CD8-positive, alpha-beta memory T cell (primary cell): ENCODE measurements at regions of chr10 and their contacts with region 1.

Region 1: GRCh38 chr10:3584941-3585340 is 200.1 kb downstream of the KLF6 start:
- DNase-seq: no peak
- H3K4me3 ChIP-seq: no peak overlapping the region
- H3K4me3 Mint-ChIP-seq: no peak overlapping the region
- H3K27ac ChIP-seq: no peak overlapping the region
- H3K27ac Mint-ChIP-seq: no peak overlapping the region
- H3K4me1 ChIP-seq: no peaks in the 10 kb centered on the region
- H3K4me1 Mint-ChIP-seq: peaks cover 0 to under 1% (median 0%) of the 10 kb centered on the region in 3 donors
- H3K27me3 ChIP-seq: no peaks in the 10 kb centered on the region
- H3K27me3 Mint-ChIP-seq: peaks cover 11 to 28% of the 10 kb centered on the region in 2 donors

Region 2: DNA sequence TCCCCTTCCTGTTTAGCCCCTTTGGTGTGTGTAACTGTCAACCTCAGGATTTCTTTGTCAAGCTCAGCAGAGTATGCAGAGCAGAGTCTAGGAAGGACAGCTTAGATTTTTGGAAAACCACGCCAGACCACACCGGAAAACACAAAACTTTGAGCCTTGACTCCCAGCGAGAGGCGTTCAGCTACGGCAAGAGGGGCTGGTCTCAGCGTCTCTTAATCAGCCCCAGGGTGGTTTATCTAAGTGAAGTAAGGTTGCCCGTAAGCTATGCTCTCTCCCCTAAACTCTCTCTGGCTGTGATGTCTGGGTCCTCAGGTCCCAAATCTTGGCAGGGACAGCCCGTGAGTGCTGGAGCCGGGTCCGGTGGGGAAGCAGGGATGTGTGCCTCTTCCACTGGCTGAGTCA is 30.8 kb before region 1 on chr10:
- CTCF ChIA-PET with region 1: no interaction called
- POLR2A ChIA-PET with region 1: no interaction called
- DNase-seq: no peak
- H3K4me3 ChIP-seq: no peak overlapping the region
- H3K4me3 Mint-ChIP-seq: peak overlapping the region in 6 of 7 donors; percentile 52 to 89 (median 67)
- H3K27ac ChIP-seq: no peak overlapping the region
- H3K27ac Mint-ChIP-seq: peak overlapping the region in 6 of 8 donors; percentile 64 to 85 (median 80)
- H3K4me1 ChIP-seq: peaks cover 7% of the 10 kb centered on the region
- H3K4me1 Mint-ChIP-seq: peaks cover 17 to 29% (median 24%) of the 10 kb centered on the region in 3 donors
- H3K27me3 ChIP-seq: no peaks in the 10 kb centered on the region
- H3K27me3 Mint-ChIP-seq: peaks cover 0 to 3% of the 10 kb centered on the region in 2 donors

Region 3: GRCh38 chr10:3570131-3570729 is 14.7 kb before region 1 on chr10:
- CTCF ChIA-PET with region 1: no interaction called
- POLR2A ChIA-PET with region 1: no interaction called
- DNase-seq: no peak
- H3K4me3 ChIP-seq: no peak overlapping the region
- H3K4me3 Mint-ChIP-seq: no peak overlapping the region
- H3K27ac ChIP-seq: no peak overlapping the region
- H3K27ac Mint-ChIP-seq: no peak overlapping the region
- H3K4me1 ChIP-seq: peaks cover 8% of the 10 kb centered on the region
- H3K4me1 Mint-ChIP-seq: peaks cover 10 to 18% (median 14%) of the 10 kb centered on the region in 3 donors
- H3K27me3 ChIP-seq: no peaks in the 10 kb centered on the region
- H3K27me3 Mint-ChIP-seq: peaks cover 3 to 4% of the 10 kb centered on the region in 2 donors

Region 4: GRCh38 chr10:3612183-3613001 is 27.5 kb after region 1 on chr10:
- CTCF ChIA-PET with region 1: no interaction called
- POLR2A ChIA-PET with region 1: interaction called, 10 read pairs
- DNase-seq: no peak
- H3K4me3 ChIP-seq: no peak overlapping the region
- H3K4me3 Mint-ChIP-seq: no peak overlapping the region
- H3K27ac ChIP-seq: no peak overlapping the region
- H3K27ac Mint-ChIP-seq: peak overlapping the region in 1 of 8 donors; percentile 51
- H3K4me1 ChIP-seq: no peaks in the 10 kb centered on the region
- H3K4me1 Mint-ChIP-seq: no peaks in the 10 kb centered on the region
- H3K27me3 ChIP-seq: no peaks in the 10 kb centered on the region
- H3K27me3 Mint-ChIP-seq: peaks cover 0 to 3% of the 10 kb centered on the region in 2 donors